WTC11 (cell line): ENCODE measurements at regions of chr1 and their contacts with region 1.

Region 1: GRCh38 chr1:154936555-154937084 is at the start of gene PMVK:
- DNase-seq: peak; percentile 93
- ATAC-seq: peak; percentile 87
- H3K4me3 Mint-ChIP-seq: peak within 1 kb of the TSS; percentile 92
- H3K27ac Mint-ChIP-seq: peak within 1 kb of the TSS; percentile 99
- H3K4me1 Mint-ChIP-seq: peaks cover 26% of the 10 kb centered on the region
- H3K27me3 Mint-ChIP-seq: peaks cover 3% of the 10 kb centered on the region; the same call in 1 of the 2 replicates
- CTCF ChIP-seq: no peak
- total RNA-seq, gene PMVK: 26.8 to 38.7 TPM (median 36.8 TPM) in 3 replicates

Region 2: DNA sequence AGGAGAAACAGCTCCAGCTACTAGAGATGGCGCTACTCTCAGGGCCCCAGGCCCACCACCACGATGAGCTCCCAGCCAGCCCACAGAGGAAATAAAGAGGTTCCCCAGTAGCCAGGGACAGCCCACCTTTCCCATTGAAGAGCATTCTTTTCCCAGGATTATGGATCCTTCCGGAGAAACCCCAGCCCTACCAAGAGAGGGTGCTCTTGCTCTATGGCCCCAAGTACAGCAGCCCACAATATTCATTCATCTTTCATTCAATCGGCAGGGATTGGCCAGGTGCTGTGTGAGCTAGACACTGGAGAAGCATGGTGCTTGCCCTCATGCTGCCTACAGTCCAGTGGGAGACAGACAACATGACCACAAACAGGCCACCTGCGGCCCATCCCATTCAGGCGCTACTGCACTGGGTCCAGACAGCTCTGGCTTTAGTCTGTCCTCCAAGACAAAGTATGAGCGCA is 30.0 kb before region 1 on chr1:
- CTCF ChIA-PET with region 1: interaction called, 14 read pairs
- POLR2A ChIA-PET with region 1: no interaction called
- DNase-seq: peak; percentile 15
- ATAC-seq: peak; percentile 81
- H3K4me3 Mint-ChIP-seq: no peak overlapping the region
- H3K27ac Mint-ChIP-seq: no peak overlapping the region
- H3K4me1 Mint-ChIP-seq: no peaks in the 10 kb centered on the region
- H3K27me3 Mint-ChIP-seq: peaks cover 8% of the 10 kb centered on the region
- CTCF ChIP-seq: no peak

Region 3: GRCh38 chr1:154955718-154956543 is 19.3 kb after region 1 on chr1 and contains the start of gene PBXIP1:
- CTCF ChIA-PET with region 1: interaction called, 4 read pairs
- POLR2A ChIA-PET with region 1: interaction called, 18 read pairs
- DNase-seq: peak; percentile 85
- ATAC-seq: peak; percentile 87
- H3K4me3 Mint-ChIP-seq: peak within 1 kb of the TSS; percentile 97
- H3K27ac Mint-ChIP-seq: peak within 1 kb of the TSS; percentile 99
- H3K4me1 Mint-ChIP-seq: peaks cover 53% of the 10 kb centered on the region
- H3K27me3 Mint-ChIP-seq: no peaks in the 10 kb centered on the region
- CTCF ChIP-seq: no peak
- total RNA-seq, gene PBXIP1: 26.5 to 30.7 TPM (median 28.4 TPM) in 3 replicates

Region 4: GRCh38 chr1:155135415-155136028 is 198.9 kb after region 1 on chr1 and contains the start of gene SLC50A1:
- CTCF ChIA-PET with region 1: no interaction called
- POLR2A ChIA-PET with region 1: no interaction called
- DNase-seq: peak; percentile 97
- ATAC-seq: peak; percentile 87
- H3K4me3 Mint-ChIP-seq: peak within 1 kb of the TSS; percentile 96
- H3K27ac Mint-ChIP-seq: peak within 1 kb of the TSS; percentile 96
- H3K4me1 Mint-ChIP-seq: peaks cover 21% of the 10 kb centered on the region
- H3K27me3 Mint-ChIP-seq: peaks cover under 1% of the 10 kb centered on the region; the same call in 1 of the 2 replicates
- CTCF ChIP-seq: no peak
- total RNA-seq, gene SLC50A1: 39.0 to 47.8 TPM (median 46.0 TPM) in 3 replicates

Region 5: GRCh38 chr1:155193275-155193990 is 256.8 kb after region 1 on chr1:
- CTCF ChIA-PET with region 1: no interaction called
- POLR2A ChIA-PET with region 1: no interaction called
- DNase-seq: peak; percentile 97
- ATAC-seq: peak; percentile 67
- H3K4me3 Mint-ChIP-seq: peak overlapping the region; percentile 99
- H3K27ac Mint-ChIP-seq: peak overlapping the region; percentile 99
- H3K4me1 Mint-ChIP-seq: peaks cover 34% of the 10 kb centered on the region
- H3K27me3 Mint-ChIP-seq: peaks cover 4% of the 10 kb centered on the region; the same call in 1 of the 2 replicates
- CTCF ChIP-seq: peak; percentile 98